ENCODE measurements at regions of chr3 and their contacts with region 1.

Region 1: DNA sequence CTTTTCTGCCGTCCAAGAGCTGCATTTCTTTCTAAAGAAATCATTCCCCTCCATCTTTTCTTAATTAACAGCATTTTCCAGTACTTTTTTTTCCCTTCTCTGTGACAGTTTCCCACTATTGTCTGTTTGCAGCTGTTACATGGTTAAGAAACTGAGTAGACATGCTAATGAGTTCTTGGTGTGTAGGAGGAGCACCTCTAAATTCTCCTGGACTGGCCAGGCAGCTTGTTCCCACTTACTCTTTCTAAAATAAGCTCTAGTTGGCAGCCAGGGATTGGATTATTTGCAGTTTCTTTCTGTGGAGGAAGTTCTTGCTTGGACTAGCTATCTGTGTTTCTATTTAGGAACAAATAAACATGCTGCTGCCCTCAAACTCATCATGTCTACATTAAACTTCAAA is 235.1 kb upstream of the GAP43 start:
- DNase-seq: peak; percentile 14 to 21
- H3K4me3 ChIP-seq: no peak overlapping the region
- H3K27ac ChIP-seq: no peak overlapping the region
- H3K4me1 ChIP-seq: no peaks in the 10 kb centered on the region
- H3K27me3 ChIP-seq: no peaks in the 10 kb centered on the region
- CTCF ChIP-seq: no peak
- POLR2A ChIP-seq: no peak

Region 2: GRCh38 chr3:115169808-115170207 is 218.4 kb before region 1 on chr3:
- intact Hi-C with region 1: loop called (anchors 5 kb)
- DNase-seq: no peak
- H3K4me3 ChIP-seq: no peak overlapping the region
- H3K27ac ChIP-seq: no peak overlapping the region
- H3K4me1 ChIP-seq: no peaks in the 10 kb centered on the region
- H3K27me3 ChIP-seq: no peaks in the 10 kb centered on the region
- CTCF ChIP-seq: peak in 3 of 4 experiments; percentile 24 to 43 (median 29)
- POLR2A ChIP-seq: no peak

Region 3: GRCh38 chr3:115494826-115495225 is 106.7 kb after region 1 on chr3:
- intact Hi-C with region 1: no loop called
- DNase-seq: no peak
- H3K4me3 ChIP-seq: no peak overlapping the region
- H3K27ac ChIP-seq: no peak overlapping the region
- H3K4me1 ChIP-seq: no peaks in the 10 kb centered on the region
- H3K27me3 ChIP-seq: no peaks in the 10 kb centered on the region
- CTCF ChIP-seq: no peak
- POLR2A ChIP-seq: no peak

Measured in uterus (tissue), 4 donors.